HepG2 (cell line): ENCODE measurements at regions of chr1 and their contacts with region 1.

Region 1: GRCh38 chr1:203117611-203118575 is 9.6 kb upstream of the ADORA1 start:
- DNase-seq: peak; percentile 30
- ATAC-seq: peak; percentile 99
- H3K4me3 ChIP-seq: no peak overlapping the region; a peak in 1 of 6 replicates
- H3K27ac ChIP-seq: no peak overlapping the region
- H3K4me1 ChIP-seq: no peaks in the 10 kb centered on the region
- H3K27me3 ChIP-seq: peaks cover 1 to 21% of the 10 kb centered on the region in 2 experiments; a peak in 3 of 5 replicates
- CTCF ChIP-seq: peak; percentile 91
- EP300 ChIP-seq: no peak
- POLR2A ChIP-seq: no peak
- RAD21 ChIP-seq: peak; percentile 84

Region 2: DNA sequence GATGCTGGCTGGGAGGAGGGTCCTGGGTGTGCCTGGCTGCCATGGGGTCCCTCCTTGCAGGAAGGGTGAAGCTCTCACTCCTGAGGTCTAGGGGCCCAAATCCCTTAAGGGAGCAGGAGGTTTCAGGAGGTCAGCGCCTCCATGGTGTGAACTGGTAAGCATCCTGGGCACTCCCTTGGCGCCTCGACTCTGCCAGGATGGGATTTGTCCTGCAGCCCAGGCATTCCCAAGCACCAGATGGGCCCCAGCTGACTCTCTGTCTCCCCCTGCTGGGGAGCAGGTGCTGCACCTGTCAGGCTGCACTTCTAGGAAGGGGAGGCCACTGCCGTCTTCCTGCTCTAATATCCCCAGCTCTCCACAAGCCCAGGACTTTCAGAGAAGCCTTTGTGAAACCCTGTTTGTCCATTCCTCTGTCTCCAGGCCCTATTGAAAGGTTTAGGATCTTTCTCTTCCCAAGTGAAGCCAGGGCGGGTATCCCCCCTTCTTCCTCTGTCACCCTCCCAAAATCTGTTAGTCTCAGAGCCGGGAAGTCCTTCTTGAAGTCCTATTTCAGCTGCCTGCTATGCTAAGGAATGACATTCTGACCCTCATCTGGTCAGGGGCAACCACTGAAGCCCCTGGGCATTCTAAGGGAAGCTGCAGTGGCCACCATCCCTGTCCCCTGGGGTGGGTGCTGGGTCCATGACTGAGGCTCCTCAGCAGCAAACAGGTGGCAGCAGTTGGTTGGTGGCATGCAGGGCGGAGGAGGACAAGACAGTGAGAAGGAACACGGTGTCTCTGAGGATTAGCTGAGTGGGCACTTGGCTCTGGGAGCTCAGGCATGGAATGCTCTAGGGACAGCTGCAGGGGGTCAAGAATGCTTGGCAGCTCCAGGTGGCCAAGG is 54.5 kb after region 1 on chr1:
- CTCF ChIA-PET with region 1: no interaction called
- POLR2A ChIA-PET with region 1: no interaction called
- in situ Hi-C with region 1: loop called (anchors 5 kb)
- intact Hi-C with region 1: no loop called
- DNase-seq: peak; percentile 37
- ATAC-seq: peak; percentile 85
- H3K4me3 ChIP-seq: no peak overlapping the region
- H3K27ac ChIP-seq: no peak overlapping the region
- H3K4me1 ChIP-seq: peaks cover 5% of the 10 kb centered on the region
- H3K27me3 ChIP-seq: peaks cover 2 to 13% of the 10 kb centered on the region in 2 experiments; a peak in 3 of 5 replicates
- CTCF ChIP-seq: peak; percentile 86
- EP300 ChIP-seq: no peak
- POLR2A ChIP-seq: no peak
- RAD21 ChIP-seq: peak; percentile 51; the same call in 1 of the 2 replicates

Region 3: GRCh38 chr1:203216274-203217138 is 98.6 kb after region 1 on chr1:
- CTCF ChIA-PET with region 1: interaction called, 17 read pairs
- POLR2A ChIA-PET with region 1: no interaction called
- in situ Hi-C with region 1: loop called (anchors 5 kb)
- intact Hi-C with region 1: loop called (anchors 1 kb)
- DNase-seq: peak; percentile 53
- ATAC-seq: peak; percentile 84
- H3K4me3 ChIP-seq: no peak overlapping the region
- H3K27ac ChIP-seq: no peak overlapping the region
- H3K4me1 ChIP-seq: peaks cover 5% of the 10 kb centered on the region
- H3K27me3 ChIP-seq: peaks cover 0 to 22% of the 10 kb centered on the region in 2 experiments; a peak in 3 of 5 replicates
- CTCF ChIP-seq: peak; percentile 85
- EP300 ChIP-seq: no peak
- POLR2A ChIP-seq: no peak
- RAD21 ChIP-seq: peak; percentile 71; the same call in 1 of the 2 replicates

Region 4: GRCh38 chr1:203229471-203230135 is 111.7 kb after region 1 on chr1 and contains the start of gene CHIT1:
- CTCF ChIA-PET with region 1: no interaction called
- POLR2A ChIA-PET with region 1: no interaction called
- in situ Hi-C with region 1: no loop called
- intact Hi-C with region 1: no loop called
- DNase-seq: no peak
- ATAC-seq: no peak
- H3K4me3 ChIP-seq: no peak within 1 kb of the TSS
- H3K27ac ChIP-seq: no peak within 1 kb of the TSS
- H3K4me1 ChIP-seq: no peaks in the 10 kb centered on the region
- H3K27me3 ChIP-seq: peaks cover 0 to 22% of the 10 kb centered on the region in 2 experiments; a peak in 3 of 5 replicates
- CTCF ChIP-seq: no peak
- EP300 ChIP-seq: no peak
- POLR2A ChIP-seq: no peak
- RAD21 ChIP-seq: no peak
- total RNA-seq, gene CHIT1: not detected in 2 replicates

Region 5: DNA sequence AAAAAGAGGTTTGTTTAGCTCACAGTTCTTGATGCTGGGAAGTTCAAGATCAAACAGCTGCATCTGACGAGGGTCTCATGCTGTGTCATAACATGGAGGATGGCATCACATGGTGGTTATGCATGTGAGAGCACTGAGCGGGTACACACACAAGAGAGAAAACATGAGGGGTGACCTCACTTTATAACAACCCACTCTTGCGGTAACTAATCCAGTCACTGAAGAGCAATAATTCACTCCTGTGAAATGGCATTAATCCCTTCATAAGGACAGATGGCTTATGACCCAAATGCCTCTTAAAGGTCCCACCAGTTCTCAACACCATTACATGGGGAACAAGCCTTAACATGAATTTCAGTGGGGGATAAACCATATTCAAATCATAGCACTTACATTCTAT is 134.8 kb after region 1 on chr1:
- CTCF ChIA-PET with region 1: no interaction called
- POLR2A ChIA-PET with region 1: no interaction called
- in situ Hi-C with region 1: no loop called
- intact Hi-C with region 1: no loop called
- DNase-seq: no peak
- ATAC-seq: no peak
- H3K4me3 ChIP-seq: no peak overlapping the region
- H3K27ac ChIP-seq: no peak overlapping the region
- H3K4me1 ChIP-seq: no peaks in the 10 kb centered on the region
- H3K27me3 ChIP-seq: no peaks in the 10 kb centered on the region
- CTCF ChIP-seq: no peak
- EP300 ChIP-seq: no peak
- POLR2A ChIP-seq: no peak
- RAD21 ChIP-seq: no peak

Region 6: GRCh38 chr1:203267347-203267846 is 149.5 kb after region 1 on chr1:
- CTCF ChIA-PET with region 1: interaction called, 9 read pairs
- POLR2A ChIA-PET with region 1: no interaction called
- in situ Hi-C with region 1: no loop called
- intact Hi-C with region 1: loop called (anchors 2 kb)
- DNase-seq: peak; percentile 72
- ATAC-seq: peak; percentile 80
- H3K4me3 ChIP-seq: peak overlapping the region; percentile 56 to 82 (median 70); a peak in 5 of 6 replicates
- H3K27ac ChIP-seq: no peak overlapping the region
- H3K4me1 ChIP-seq: 0 out of 2 replicates have a peak, but pooled peaks cover 5% of the 10 kb centered on the region
- H3K27me3 ChIP-seq: peaks cover 0 to 3% of the 10 kb centered on the region in 2 experiments; a peak in 3 of 5 replicates
- CTCF ChIP-seq: peak; percentile 80
- EP300 ChIP-seq: no peak
- POLR2A ChIP-seq: no peak
- RAD21 ChIP-seq: no peak